ENCODE measurements at regions of chr6 and their contacts with region 1.

Region 1: DNA sequence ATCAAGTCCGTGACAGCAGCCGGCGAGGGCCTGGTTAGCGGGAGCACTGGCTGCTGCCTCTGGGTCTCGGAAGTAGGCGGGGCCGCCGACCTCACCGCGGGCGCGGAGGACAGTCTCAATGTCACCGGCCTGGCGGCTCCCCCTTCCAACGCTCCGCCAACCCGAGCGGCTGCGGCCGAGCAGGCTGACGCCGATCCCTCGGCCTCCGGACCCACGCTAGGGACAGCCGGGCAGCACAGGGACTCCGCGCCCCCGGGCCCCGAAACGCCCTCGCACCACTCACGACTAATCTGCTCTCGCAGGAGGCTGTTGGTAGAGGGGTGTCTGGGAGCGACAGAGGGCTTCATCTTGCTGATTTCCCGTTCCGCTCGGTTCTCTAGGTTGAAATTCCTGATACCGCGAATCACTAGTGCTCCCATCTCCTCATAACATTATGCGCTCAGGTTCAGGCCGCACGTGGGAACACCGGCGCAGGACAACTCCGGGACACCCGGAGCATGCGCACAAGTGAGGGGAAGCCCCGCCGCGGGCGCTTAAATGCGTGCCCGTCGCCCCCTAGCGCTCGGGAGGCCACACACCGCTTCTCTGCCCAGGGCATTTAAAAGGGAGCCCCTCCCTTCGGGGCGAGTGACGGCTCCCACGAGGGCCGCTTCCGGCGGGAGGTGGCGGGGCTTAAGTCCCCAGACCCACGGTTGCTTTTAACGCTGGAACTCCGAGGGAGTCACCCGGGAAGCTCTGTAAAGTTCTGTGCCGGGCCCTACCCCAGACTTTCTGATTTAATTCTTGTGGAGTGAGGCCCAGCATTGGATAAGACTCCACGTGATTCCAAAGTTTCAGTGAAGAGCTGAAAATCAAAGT is at the start of gene NDUFAF4:
- DNase-seq: peak; percentile 97
- ATAC-seq: peak; percentile 100
- total RNA-seq, gene NDUFAF4: 101 TPM

Region 2: DNA sequence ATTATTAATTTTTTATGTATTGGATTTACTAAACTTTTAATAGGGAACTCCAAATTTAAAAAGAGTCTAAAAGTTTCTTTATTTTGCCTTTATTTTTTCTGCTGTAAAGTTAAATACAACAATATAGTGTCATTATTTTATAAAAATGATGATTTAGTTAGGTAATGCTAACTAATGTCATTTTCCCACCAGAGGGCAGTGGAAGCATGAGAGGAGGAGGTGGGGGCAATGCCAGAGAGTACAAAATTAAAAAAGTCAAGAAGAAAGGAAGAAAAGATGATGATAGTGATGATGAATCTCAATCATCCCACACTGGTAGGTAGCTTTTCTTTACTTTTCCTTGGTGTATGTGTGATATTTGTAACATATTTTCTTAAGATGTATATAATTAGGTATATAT is 354.9 kb before region 1 on chr6:
- intact Hi-C with region 1: loop called (anchors 10 kb)
- DNase-seq: no peak
- ATAC-seq: no peak

Region 3: GRCh38 chr6:96626759-96627364 is 270.8 kb before region 1 on chr6:
- intact Hi-C with region 1: loop called (anchors 2 kb)
- DNase-seq: no peak
- ATAC-seq: no peak

Region 4: DNA sequence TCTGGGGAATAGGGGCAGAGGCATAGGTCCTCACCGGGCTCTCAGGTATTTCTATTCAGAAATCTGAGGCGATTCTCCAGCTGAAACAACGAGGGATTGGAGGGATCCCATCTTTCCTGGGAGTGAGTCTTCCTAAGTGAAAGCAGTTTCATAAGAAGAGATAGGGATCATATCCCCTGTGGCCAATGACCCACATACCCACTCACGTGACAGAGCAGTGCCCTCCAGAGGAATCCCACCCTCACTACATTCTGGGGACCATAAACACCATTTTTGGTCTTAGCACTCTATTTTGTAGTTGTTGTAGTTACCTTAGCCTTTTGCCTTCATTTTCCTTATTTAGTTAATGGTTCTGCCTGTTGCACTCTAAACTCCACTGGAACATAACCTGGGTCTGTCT is 181.4 kb before region 1 on chr6:
- intact Hi-C with region 1: no loop called
- DNase-seq: no peak
- ATAC-seq: no peak

Region 5: DNA sequence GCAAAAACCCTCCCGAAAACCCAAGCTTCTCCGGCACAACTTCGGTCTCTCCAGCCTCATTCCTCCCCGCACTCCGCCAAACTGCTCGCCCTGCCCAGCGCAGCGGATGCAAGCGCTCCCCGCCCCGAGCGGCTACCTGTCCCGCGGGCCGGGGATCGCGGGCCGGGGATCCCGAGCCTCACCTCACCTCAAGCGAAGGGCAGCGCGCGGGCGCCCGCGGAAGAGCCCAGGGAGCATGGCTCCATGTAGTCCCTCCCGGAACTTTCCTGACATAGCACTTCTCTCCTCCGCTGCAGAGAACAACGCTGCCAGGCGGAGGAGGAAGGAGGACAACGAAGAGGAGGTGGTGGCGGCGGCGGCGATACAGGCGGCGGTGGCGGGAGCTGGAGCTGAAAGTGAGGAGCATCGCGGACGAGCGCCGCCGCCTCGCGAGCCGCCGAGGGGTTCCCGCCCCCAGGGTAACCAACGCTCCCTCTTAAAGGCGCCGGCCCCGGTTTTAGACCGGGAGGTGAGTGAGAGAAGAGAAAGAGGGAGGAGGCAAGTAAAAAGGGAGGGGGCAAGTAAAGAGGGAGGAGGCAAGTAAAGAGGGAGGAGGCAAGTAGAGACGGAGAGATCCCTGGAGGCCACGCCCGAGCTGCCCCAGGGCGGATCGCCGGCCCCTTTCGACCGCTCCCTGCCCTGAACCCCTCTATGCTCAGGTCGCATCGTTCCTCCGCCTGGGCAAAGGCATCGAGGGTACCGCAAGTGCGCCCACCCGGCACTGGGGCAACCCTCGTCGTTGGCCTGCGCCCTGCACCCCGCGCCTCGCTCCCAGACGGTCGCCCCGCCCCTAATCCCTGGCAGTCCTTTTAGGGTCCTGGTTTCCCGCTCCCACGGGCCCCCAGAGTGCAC is 60.3 kb before region 1 on chr6 and contains the start of gene GPR63:
- intact Hi-C with region 1: loop called (anchors 5 kb)
- DNase-seq: peak; percentile 69
- ATAC-seq: peak; percentile 85
- total RNA-seq, gene GPR63: 0.65 TPM

Region 6: DNA sequence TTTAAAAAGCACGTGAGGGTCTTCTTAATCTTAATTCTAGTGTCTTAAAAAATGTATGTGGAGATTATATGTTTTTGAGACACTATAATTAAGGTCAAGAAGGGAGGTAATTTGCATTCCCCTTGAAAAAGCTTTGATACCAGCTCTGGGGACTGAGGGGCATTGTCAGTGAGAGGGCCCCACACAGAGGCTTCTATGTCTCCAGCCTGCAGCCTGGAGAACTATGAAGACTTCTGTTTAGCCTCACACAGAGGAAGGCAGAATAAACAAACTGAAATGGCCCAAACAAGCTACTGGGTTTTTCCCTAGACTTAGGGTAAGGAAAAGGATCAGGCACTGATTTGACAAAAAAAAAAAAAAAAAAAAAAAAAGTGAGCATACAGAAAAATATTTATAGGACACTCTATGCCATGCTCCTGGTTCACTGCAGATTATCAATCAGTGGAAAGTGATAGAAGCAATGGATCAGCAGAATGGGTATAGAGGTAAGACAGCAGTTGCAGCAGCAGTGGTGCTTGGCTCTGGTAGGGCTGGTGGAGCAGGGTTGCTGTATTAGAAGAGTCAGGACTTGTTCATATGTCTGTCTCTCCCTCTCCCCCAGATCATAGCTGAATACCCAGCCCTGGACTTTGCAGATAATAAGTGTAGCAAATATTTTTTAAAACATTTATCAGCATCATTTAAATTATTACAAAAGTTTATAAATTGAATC is 112.3 kb after region 1 on chr6:
- intact Hi-C with region 1: no loop called
- DNase-seq: no peak
- ATAC-seq: no peak

Region 7: DNA sequence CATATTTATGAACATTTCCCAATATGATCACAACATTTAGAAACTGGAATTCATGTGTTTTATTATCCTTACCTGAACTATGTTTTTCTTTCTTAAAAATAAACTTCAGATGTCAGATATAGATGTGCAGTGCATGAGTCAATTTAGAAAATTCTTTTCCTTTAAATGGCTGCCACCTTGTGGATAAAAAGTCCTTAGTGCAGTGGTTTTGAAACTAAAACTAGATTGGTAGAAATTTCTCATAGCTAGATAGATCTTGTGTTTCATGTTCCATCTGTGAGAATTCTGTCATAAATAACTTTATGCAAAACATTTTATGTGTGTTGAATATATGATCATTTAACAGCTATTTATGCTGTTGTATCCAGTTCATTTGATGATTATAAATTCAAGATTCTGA is 161.9 kb after region 1 on chr6:
- intact Hi-C with region 1: loop called (anchors 2 kb)
- DNase-seq: no peak
- ATAC-seq: no peak

Measured in Right ventricle myocardium inferior (tissue), 1 donor.